Heart right ventricle (tissue), 16 donors: ENCODE measurements at regions of chr2 and their contacts with region 1.

Region 1: DNA sequence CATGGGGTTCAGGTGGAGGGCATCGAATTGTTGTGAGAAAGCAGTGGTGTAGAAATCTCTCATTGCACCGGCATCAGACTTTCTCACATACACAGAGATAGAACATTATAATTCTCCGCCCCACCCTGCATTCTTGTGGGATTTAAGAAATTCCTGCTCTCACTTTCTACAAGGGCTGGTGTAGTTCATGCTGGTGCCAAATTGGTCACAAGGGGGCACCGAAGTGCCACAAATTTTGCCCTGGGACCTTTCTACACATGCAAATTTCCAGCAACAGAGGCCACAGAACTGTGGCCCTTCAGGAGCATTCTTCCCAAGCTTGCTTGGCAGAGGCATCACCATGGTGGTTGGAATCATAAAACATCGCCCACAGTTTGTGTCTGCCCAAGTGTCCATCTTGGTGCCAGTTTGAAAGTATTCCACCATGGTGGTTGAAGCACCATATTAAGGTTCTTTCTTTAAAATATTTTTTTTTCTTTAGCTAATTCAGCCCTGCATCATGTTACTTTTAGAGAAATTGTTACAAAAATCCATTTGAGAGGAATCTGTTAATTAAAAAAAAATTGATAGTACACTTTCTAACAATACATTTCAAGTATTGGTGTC is 521.2 kb upstream of the FANCL start:
- DNase-seq: peak; percentile 11 to 13
- ATAC-seq: peak in 3 of 8 donors; percentile 61 to 74 (median 72)
- H3K4me3 ChIP-seq: no peak overlapping the region
- H3K27ac ChIP-seq: no peak overlapping the region
- H3K4me1 ChIP-seq: no peaks in the 10 kb centered on the region
- H3K27me3 ChIP-seq: peaks cover 0 to 6% (median 0%) of the 10 kb centered on the region in 7 donors
- CTCF ChIP-seq: peak in 8 of 9 donors; percentile 17 to 64 (median 56)

Region 2: DNA sequence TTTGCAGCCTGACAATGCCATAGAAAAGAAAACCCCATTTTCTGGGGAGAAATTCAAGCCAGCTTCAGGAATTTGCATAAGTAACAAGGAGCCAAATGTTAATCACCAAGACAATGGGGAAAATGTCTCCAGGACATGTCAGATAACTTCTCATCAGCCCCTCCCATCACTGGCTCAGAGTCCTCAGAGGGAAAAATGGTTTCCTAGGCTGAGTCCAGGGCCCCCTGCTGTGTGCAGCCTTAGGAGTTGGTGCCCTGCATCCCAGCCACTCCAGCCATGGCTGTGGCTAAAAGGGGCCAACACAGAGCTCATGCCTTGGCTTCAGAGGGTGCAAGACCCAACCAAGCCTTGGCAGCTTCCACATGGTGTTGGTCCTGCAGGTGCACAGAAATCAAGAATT is 457.4 kb before region 1 on chr2:
- intact Hi-C with region 1: no loop called
- DNase-seq: no peak
- ATAC-seq: no peak
- H3K4me3 ChIP-seq: no peak overlapping the region
- H3K27ac ChIP-seq: no peak overlapping the region
- H3K4me1 ChIP-seq: no peaks in the 10 kb centered on the region
- H3K27me3 ChIP-seq: no peaks in the 10 kb centered on the region
- CTCF ChIP-seq: no peak

Region 3: DNA sequence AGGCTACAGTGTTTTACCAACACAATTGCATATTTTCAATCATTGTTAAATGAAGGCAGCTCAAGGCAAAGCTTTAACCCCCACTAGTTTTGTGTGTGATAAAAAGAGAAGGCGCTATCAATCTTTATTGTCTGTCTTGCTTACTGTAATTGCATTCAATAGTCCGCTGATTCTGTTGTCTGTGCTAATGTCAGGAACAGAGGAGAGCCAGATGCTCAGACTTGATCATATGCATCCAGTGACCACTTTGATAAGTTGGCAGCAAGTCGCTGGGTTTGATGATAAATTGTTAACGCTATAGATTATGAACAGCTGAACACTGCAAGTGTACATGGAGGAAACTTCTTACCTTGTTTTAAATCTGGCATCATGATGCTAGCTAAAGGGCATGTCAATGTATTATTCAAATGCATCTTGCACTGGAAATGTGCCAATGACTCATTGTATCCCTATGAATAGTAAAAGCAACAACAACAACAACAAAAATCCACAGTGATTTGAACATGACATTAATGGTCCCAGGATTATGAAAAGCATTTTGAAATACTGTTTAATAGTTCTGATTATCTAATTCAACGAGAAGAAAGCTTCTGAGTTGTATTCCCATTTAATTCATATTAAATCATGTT is 97.6 kb before region 1 on chr2:
- intact Hi-C with region 1: no loop called
- DNase-seq: no peak
- ATAC-seq: no peak
- H3K4me3 ChIP-seq: no peak overlapping the region
- H3K27ac ChIP-seq: no peak overlapping the region
- H3K4me1 ChIP-seq: no peaks in the 10 kb centered on the region
- H3K27me3 ChIP-seq: peaks cover 0 to 3% (median 0%) of the 10 kb centered on the region in 7 donors
- CTCF ChIP-seq: no peak

Region 4: GRCh38 chr2:58710795-58711279 is 51.4 kb before region 1 on chr2:
- intact Hi-C with region 1: no loop called
- DNase-seq: peak in 1 of 2 donors; percentile 2
- ATAC-seq: no peak
- H3K4me3 ChIP-seq: no peak overlapping the region
- H3K27ac ChIP-seq: no peak overlapping the region
- H3K4me1 ChIP-seq: no peaks in the 10 kb centered on the region
- H3K27me3 ChIP-seq: peaks cover 0 to 6% (median 0%) of the 10 kb centered on the region in 7 donors
- CTCF ChIP-seq: no peak

Region 5: DNA sequence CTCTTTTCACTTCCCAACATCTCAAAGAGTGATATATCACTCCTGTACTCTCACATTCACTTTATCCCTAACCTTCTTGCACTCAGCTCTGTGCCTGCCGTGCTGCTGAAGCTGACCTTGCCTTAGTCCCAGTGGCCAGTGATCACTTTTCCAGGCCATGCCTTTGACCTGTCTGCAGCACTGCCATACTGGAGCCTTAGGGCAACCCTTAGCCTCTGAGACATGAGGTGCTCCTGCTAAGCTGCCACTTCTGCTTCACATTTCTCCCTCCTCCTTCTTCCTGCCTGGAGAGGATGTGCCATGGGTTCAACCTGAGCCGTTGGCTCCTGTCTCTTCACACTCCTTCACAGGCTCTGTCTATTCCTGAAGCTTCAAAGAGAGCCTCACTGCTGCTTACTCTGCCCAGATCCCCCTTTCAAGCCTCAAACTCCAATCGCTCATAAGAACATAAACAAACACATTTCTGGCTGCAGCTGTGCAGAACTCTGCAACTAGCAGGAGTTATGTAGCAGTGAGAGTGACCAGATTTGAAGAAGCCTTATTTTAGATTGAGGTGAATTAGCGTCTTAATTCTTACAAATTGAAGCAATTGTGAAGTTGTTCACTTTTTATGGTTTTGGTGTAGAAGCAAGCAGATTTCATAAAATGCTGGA is 195.0 kb after region 1 on chr2:
- intact Hi-C with region 1: no loop called
- DNase-seq: no peak
- ATAC-seq: no peak
- H3K4me3 ChIP-seq: no peak overlapping the region
- H3K27ac ChIP-seq: no peak overlapping the region
- H3K4me1 ChIP-seq: peaks cover 0 to 6% (median 0%) of the 10 kb centered on the region in 9 donors
- H3K27me3 ChIP-seq: no peaks in the 10 kb centered on the region
- CTCF ChIP-seq: no peak

Region 6: DNA sequence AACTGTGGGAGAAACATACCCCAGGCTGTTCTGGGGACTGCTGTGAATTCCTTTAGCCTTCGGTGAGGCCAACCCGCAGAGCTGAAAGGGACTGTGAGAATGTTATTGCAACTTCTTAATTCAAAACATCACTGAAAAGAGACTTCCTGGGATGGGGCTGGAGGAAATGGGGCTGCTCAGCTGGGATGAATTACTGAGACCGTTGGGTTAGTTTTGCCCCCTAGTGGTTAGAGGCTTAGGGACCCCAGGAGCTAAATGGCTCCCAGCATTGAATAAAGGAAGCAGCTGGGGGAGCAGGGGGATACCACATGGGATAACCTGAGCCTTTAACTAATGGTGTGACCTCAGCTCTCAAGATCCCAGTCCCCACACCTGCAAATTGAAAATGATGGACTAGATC is 420.0 kb after region 1 on chr2:
- intact Hi-C with region 1: loop called in 6 of 10 experiments (anchors 5 to 10 kb)
- DNase-seq: no peak
- ATAC-seq: no peak
- H3K4me3 ChIP-seq: no peak overlapping the region
- H3K27ac ChIP-seq: no peak overlapping the region
- H3K4me1 ChIP-seq: no peaks in the 10 kb centered on the region
- H3K27me3 ChIP-seq: peaks cover 0 to 10% (median 0%) of the 10 kb centered on the region in 7 donors
- CTCF ChIP-seq: peak in 7 of 9 donors; percentile 35 to 51 (median 42)

Region 7: DNA sequence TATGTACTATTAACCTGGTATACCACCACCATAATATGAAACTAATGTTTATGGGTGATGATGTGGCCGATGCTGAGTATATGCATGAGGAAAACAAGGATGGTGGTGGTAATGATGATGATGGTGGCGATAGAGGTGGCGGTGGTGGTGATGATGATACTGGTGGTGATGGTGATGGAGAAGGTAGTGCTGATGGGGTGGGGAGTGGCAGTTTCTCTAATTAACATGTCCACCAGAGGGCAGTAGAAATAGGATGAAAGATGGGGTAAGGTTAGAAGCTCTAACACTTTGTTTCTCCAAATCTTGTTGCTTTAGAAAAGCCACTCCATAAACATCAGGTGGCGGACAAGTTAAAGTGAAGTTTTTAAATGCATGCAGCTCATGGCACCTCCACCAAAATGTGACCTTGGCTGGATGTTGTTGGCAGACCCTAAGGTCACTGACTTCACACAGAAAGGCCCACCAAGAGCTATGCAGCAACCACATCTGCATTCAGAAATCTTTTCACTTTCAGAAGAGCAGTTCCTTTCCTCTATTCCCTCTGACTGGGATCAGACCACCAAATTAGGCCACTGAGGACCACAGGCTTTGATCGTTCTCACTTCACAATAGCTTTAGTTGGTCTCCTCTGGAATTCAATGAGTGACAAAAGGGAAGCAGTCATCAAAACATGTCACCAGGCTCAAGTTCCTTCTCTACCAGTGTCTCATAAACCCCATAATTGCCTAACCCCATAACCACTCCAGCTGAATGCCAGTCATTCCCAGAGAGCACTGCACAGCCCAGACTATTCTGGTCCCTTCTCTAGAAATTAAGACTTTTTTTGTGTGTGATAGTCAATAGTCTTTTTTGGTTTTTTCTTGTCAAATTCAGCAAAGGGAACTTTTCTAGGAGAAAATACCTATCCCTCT is 1798.7 kb after region 1 on chr2:
- intact Hi-C with region 1: loop called in 2 of 10 experiments (anchors 5 kb)
- DNase-seq: no peak
- ATAC-seq: peak in 2 of 8 donors; percentile 52 to 71
- H3K4me3 ChIP-seq: no peak overlapping the region
- H3K27ac ChIP-seq: no peak overlapping the region
- H3K4me1 ChIP-seq: peaks cover 0 to 16% (median 4%) of the 10 kb centered on the region in 9 donors
- H3K27me3 ChIP-seq: peaks cover 0 to 87% (median 78%) of the 10 kb centered on the region in 7 donors
- CTCF ChIP-seq: peak in 7 of 9 donors; percentile 38 to 52 (median 47)

Region 8: GRCh38 chr2:60581433-60582282 is 1819.4 kb after region 1 on chr2:
- intact Hi-C with region 1: loop called in 2 of 10 experiments (anchors 10 kb)
- DNase-seq: peak; percentile 23 to 72
- ATAC-seq: peak; percentile 81 to 97 (median 90)
- H3K4me3 ChIP-seq: peak overlapping the region in 9 of 10 donors; percentile 23 to 48 (median 44)
- H3K27ac ChIP-seq: no peak overlapping the region
- H3K4me1 ChIP-seq: peaks cover 0 to 9% (median 4%) of the 10 kb centered on the region in 9 donors
- H3K27me3 ChIP-seq: peaks cover 0 to 69% (median 50%) of the 10 kb centered on the region in 7 donors
- CTCF ChIP-seq: peak; percentile 63 to 96 (median 91)

Region 9: DNA sequence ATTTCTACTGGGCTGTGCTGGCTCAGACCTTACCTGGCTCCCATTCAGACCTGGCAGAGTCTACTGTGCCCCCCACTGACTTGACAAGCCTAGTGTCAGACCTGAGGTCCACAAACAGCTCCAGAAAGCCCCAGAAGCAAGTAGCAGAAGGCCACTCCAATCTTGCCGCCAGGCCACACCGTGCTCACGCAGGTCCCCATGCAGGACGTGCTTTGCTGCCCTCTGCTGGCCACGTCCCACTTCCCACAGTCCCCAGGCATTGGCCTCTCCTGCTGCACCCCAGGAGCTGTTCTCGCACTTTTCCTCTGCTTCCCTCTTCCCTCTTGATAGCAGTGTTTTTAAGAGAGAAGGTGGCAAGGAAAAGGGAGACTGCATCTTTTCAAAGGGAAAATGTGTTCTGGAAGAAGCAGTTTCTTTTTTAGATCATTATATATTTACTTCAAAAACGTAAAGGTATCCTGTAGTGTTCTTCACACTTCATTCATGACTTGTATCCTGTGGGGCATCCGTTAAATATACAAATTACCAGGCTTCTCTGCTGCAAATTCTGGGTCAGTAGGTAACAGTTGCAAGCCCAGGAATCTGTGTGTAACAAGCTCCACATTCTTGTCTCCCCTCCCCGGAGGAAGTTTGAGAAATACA is 1912.4 kb after region 1 on chr2:
- intact Hi-C with region 1: loop called in 1 of 10 experiments (anchors 10 kb)
- DNase-seq: peak; percentile 82 to 87
- ATAC-seq: peak; percentile 81 to 95 (median 94)
- H3K4me3 ChIP-seq: no peak overlapping the region
- H3K27ac ChIP-seq: no peak overlapping the region
- H3K4me1 ChIP-seq: peaks cover 0 to 6% (median 0%) of the 10 kb centered on the region in 9 donors
- H3K27me3 ChIP-seq: peaks cover 0 to 39% (median 4%) of the 10 kb centered on the region in 7 donors
- CTCF ChIP-seq: peak; percentile 78 to 94 (median 91)